ENCODE measurements at regions of chr20 and their contacts with region 1.

Region 1: DNA sequence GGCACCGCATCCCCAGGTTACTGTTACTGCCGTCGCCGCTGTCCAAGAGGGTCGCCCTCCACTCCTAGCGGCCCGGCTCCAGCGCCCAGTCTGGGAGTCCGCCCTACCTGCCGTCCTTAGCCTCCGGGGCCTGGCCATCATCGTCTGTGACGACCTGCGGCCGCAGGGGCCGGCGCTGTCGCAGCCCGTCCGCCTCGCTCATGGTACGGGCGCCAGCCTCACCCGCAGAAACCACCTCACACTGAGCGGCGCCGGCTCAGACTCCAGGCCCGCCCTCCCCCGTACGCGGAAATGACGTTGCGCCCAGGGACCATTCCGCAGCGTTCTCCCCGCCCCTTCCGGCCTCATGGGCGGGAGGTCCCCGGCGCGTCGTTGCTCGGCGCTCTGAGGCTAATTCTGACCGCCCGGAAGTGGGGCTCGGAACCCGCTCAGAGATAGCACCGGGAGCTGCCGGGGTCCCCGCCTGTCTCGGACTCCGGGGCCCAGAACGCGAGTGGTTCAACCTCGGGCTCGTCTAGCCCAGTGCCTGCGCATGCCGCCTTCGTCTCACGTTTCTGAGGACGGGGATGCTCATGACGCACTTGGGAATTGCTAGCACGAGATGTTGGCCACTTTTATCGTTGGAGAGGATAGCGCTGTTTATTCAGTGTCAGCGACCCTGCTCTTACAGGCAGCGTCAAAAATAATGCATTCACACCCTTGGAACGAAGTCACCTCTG is at the start of gene APMAP:
- DNase-seq: peak; percentile 88 to 93 (median 92)
- ATAC-seq: peak; percentile 97
- H3K4me3 ChIP-seq: peak within 1 kb of the TSS; percentile 86
- H3K27ac ChIP-seq: peak within 1 kb of the TSS; percentile 74
- H3K4me1 ChIP-seq: peaks cover 10 to 11% of the 10 kb centered on the region in 2 experiments; a peak in 4 of 5 replicates
- H3K27me3 ChIP-seq: no peaks in the 10 kb centered on the region; a peak in 2 of 5 replicates
- CTCF ChIP-seq: no peak
- EP300 ChIP-seq: no peak
- POLR2A ChIP-seq: peak; percentile 83
- RAD21 ChIP-seq: no peak
- polyA plus RNA-seq, gene APMAP: 6.7 to 8.8 TPM

Region 2: DNA sequence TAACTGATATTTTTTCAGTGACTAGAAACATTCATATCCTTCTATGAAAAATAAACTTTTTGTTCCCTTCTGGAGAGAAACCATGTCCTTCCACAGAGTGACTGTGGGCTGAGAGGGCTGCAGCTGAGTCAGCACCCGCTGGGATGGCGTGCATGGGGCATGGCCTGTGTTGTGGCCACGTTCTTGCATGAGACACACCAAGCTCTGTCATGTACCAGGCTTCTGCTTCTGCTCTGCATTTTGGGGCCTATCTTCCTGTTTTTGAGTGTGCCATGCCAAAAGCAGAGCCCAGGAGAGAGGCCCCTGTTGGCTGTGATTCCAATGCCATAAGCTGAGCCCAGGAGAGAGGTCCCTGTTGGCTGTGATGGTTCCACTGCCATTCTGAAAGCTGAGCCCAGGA is 10.9 kb before region 1 on chr20:
- CTCF ChIA-PET with region 1: no interaction called
- POLR2A ChIA-PET with region 1: no interaction called
- in situ Hi-C with region 1: no loop called
- intact Hi-C with region 1: no loop called
- DNase-seq: no peak
- ATAC-seq: no peak
- H3K4me3 ChIP-seq: no peak overlapping the region
- H3K27ac ChIP-seq: no peak overlapping the region
- H3K4me1 ChIP-seq: no peaks in the 10 kb centered on the region; a peak in 1 of 5 replicates
- H3K27me3 ChIP-seq: no peaks in the 10 kb centered on the region
- CTCF ChIP-seq: no peak
- EP300 ChIP-seq: no peak
- POLR2A ChIP-seq: no peak
- RAD21 ChIP-seq: no peak

Region 3: DNA sequence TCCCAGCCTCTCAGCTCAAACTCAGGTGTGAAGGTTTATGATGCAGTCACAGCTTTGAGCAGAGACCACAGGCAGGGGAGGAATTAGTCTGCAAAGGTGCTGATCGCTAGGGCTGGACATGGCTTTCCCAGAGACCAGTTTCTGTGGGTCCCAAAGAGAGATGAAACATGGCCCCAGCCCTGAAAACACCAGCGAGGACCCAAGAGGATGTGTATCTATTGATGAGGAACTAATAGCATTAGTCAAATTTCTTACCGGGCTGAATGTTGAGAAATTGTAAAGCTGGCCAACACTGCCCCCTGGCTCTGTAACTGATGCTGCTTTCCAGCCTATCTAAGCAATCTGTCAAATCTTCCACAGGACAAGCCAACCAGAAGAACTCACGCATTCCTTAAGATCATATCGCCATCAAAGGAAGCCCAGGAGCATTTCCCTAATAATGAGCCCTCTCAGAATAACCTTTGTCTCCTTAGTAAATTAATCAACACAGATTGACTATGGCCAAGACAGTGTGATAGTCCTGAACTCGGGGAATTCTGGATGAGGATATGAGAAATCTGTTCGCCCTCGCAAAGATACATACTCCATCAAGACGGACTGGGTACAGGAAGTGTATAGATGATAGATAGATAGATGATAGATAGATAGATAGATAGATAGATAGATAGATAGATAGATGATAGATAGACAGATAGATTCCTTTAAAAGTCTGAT is 73.1 kb after region 1 on chr20:
- CTCF ChIA-PET with region 1: interaction called, 34 read pairs
- POLR2A ChIA-PET with region 1: no interaction called
- in situ Hi-C with region 1: loop called (anchors 5 kb)
- intact Hi-C with region 1: loop called (anchors 1 kb)
- DNase-seq: peak; percentile 30 to 43 (median 36)
- ATAC-seq: peak; percentile 72
- H3K4me3 ChIP-seq: no peak overlapping the region
- H3K27ac ChIP-seq: no peak overlapping the region
- H3K4me1 ChIP-seq: no peaks in the 10 kb centered on the region
- H3K27me3 ChIP-seq: peaks cover 0 to 20% of the 10 kb centered on the region in 2 experiments; a peak in 4 of 5 replicates
- CTCF ChIP-seq: peak; percentile 47 to 59 (median 58); a peak in 5 of 6 replicates
- EP300 ChIP-seq: no peak
- POLR2A ChIP-seq: no peak
- RAD21 ChIP-seq: peak; percentile 67 to 73

Region 4: GRCh38 chr20:25071734-25072133 is 79.1 kb after region 1 on chr20:
- CTCF ChIA-PET with region 1: interaction called, 34 read pairs
- POLR2A ChIA-PET with region 1: no interaction called
- in situ Hi-C with region 1: no loop called
- intact Hi-C with region 1: loop called (anchors 2 kb)
- DNase-seq: no peak
- ATAC-seq: no peak
- H3K4me3 ChIP-seq: no peak overlapping the region
- H3K27ac ChIP-seq: no peak overlapping the region
- H3K4me1 ChIP-seq: no peaks in the 10 kb centered on the region
- H3K27me3 ChIP-seq: peaks cover 0 to 14% of the 10 kb centered on the region in 2 experiments; a peak in 3 of 5 replicates
- CTCF ChIP-seq: no peak
- EP300 ChIP-seq: no peak
- POLR2A ChIP-seq: no peak
- RAD21 ChIP-seq: no peak

Region 5: GRCh38 chr20:25100914-25101313 is 108.3 kb after region 1 on chr20:
- CTCF ChIA-PET with region 1: no interaction called
- POLR2A ChIA-PET with region 1: no interaction called
- in situ Hi-C with region 1: no loop called
- intact Hi-C with region 1: no loop called
- DNase-seq: no peak
- ATAC-seq: no peak
- H3K4me3 ChIP-seq: no peak overlapping the region
- H3K27ac ChIP-seq: no peak overlapping the region
- H3K4me1 ChIP-seq: no peaks in the 10 kb centered on the region
- H3K27me3 ChIP-seq: no peaks in the 10 kb centered on the region
- CTCF ChIP-seq: no peak
- EP300 ChIP-seq: no peak
- POLR2A ChIP-seq: no peak
- RAD21 ChIP-seq: no peak

Region 6: DNA sequence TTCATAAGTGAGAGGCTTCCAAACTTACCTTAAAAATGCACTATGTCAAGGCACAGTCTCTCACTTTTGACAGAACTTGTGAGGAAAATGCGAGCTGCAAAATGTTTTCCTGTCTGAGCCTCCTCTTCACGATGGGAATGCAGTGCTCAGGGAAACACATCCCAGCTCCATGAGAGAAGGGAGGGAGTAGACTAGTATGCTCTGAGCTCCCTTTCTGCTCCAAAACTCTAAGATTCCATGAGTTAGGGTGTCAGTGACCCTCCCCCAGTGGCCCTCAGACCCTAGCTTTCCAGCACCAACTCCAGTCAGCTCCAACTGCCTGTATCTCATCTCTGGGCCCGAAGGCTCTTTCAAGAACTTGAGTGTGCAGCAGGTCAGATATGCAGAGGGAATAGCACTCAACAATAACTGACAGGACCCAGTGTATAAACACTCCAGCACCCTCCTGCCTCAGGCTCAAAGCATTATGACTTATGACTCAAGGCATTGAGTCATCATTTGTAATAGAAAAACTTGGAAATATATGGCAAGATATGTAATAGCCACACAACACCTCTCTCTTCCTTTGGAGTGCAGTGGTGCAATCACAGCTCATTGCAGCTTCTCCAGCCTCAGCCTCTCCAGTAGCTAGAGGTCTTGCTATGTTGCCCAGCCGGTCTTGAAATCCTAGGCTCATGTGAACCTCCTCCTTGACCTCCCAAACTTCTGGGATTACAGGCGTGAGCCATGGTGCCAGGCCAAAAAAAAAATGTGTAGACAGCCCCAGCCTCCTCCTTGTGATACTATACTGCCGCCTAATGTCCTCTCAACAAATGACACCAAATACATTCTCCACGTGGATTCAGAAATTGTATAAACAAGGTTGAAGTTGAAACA is 186.2 kb after region 1 on chr20:
- CTCF ChIA-PET with region 1: interaction called, 12 read pairs
- POLR2A ChIA-PET with region 1: no interaction called
- in situ Hi-C with region 1: no loop called
- intact Hi-C with region 1: loop called (anchors 2 kb)
- DNase-seq: peak; percentile 12 to 36 (median 21)
- ATAC-seq: peak; percentile 84
- H3K4me3 ChIP-seq: no peak overlapping the region
- H3K27ac ChIP-seq: no peak overlapping the region
- H3K4me1 ChIP-seq: peaks cover 0 to 3% of the 10 kb centered on the region in 2 experiments; a peak in 1 of 5 replicates
- H3K27me3 ChIP-seq: 0 out of 5 replicates have a peak, but pooled peaks cover 0 to 8% of the 10 kb centered on the region in 2 experiments
- CTCF ChIP-seq: peak; percentile 60 to 78 (median 76); a peak in 5 of 6 replicates
- EP300 ChIP-seq: no peak
- POLR2A ChIP-seq: no peak
- RAD21 ChIP-seq: peak; percentile 55 to 71

Region 7: GRCh38 chr20:25294459-25295385 is 302.1 kb after region 1 on chr20:
- CTCF ChIA-PET with region 1: no interaction called
- POLR2A ChIA-PET with region 1: no interaction called
- in situ Hi-C with region 1: no loop called
- intact Hi-C with region 1: loop called (anchors 10 kb)
- DNase-seq: peak; percentile 72 to 83 (median 79)
- ATAC-seq: peak; percentile 96
- H3K4me3 ChIP-seq: no peak overlapping the region
- H3K27ac ChIP-seq: no peak overlapping the region
- H3K4me1 ChIP-seq: peaks cover 0 to 11% of the 10 kb centered on the region in 2 experiments; a peak in 3 of 5 replicates
- H3K27me3 ChIP-seq: no peaks in the 10 kb centered on the region
- CTCF ChIP-seq: peak; percentile 94 to 100 (median 100)
- EP300 ChIP-seq: no peak
- POLR2A ChIP-seq: no peak
- RAD21 ChIP-seq: peak; percentile 42 to 84

Region 8: GRCh38 chr20:25390538-25391528 is 398.2 kb after region 1 on chr20 and contains the start of gene ABHD12:
- CTCF ChIA-PET with region 1: no interaction called
- POLR2A ChIA-PET with region 1: no interaction called
- in situ Hi-C with region 1: no loop called
- intact Hi-C with region 1: loop called (anchors 10 kb)
- DNase-seq: peak; percentile 92 to 95 (median 93)
- ATAC-seq: peak; percentile 96
- H3K4me3 ChIP-seq: peak within 1 kb of the TSS; percentile 62
- H3K27ac ChIP-seq: peak within 1 kb of the TSS; percentile 78
- H3K4me1 ChIP-seq: peaks cover 0 to 10% of the 10 kb centered on the region in 2 experiments; a peak in 3 of 5 replicates
- H3K27me3 ChIP-seq: no peaks in the 10 kb centered on the region
- CTCF ChIP-seq: no peak
- EP300 ChIP-seq: no peak
- POLR2A ChIP-seq: peak; percentile 80
- RAD21 ChIP-seq: no peak
- polyA plus RNA-seq, gene ABHD12: 0.65 to 1.2 TPM

Measured in K562 (cell line).